Endothelial cell of umbilical vein (primary cell): ENCODE measurements at regions of chr3 and their contacts with region 1.

Region 1: DNA sequence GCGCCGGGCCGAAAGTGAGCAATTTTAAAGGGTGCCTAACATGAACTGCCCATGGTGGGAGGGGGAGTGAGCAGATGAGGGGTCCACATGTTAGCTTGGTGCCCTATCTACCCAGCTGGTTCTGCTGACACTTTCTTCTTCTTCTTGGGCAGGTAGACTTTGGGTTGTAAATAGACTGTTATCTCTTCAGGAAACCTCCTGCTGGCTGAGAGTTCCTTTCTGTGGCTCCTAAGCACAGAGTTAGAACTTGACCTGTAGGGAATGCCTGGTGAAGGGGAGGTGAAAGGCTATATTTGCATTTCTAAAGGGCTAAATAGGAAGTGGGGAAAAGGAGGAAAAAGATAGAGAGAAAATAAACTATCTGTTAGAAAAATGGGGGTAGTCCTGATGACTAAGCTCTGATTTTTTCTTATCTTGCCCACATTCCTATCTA is 521.4 kb upstream of the TGFBR2 start:
- DNase-seq: peak; percentile 10
- H3K4me3 ChIP-seq: no peak overlapping the region
- H3K27ac ChIP-seq: no peak overlapping the region
- H3K4me1 ChIP-seq: no peaks in the 10 kb centered on the region
- H3K27me3 ChIP-seq: no peaks in the 10 kb centered on the region
- CTCF ChIP-seq: no peak
- POLR2A ChIP-seq: no peak

Region 2: GRCh38 chr3:30020380-30020779 is 64.6 kb before region 1 on chr3:
- CTCF ChIA-PET with region 1: no interaction called
- POLR2A ChIA-PET with region 1: no interaction called
- dilution Hi-C with region 1: no loop called
- intact Hi-C with region 1: no loop called
- DNase-seq: no peak
- H3K4me3 ChIP-seq: no peak overlapping the region
- H3K27ac ChIP-seq: no peak overlapping the region
- H3K4me1 ChIP-seq: peaks cover 8% of the 10 kb centered on the region
- H3K27me3 ChIP-seq: no peaks in the 10 kb centered on the region
- CTCF ChIP-seq: no peak
- POLR2A ChIP-seq: no peak

Region 3: DNA sequence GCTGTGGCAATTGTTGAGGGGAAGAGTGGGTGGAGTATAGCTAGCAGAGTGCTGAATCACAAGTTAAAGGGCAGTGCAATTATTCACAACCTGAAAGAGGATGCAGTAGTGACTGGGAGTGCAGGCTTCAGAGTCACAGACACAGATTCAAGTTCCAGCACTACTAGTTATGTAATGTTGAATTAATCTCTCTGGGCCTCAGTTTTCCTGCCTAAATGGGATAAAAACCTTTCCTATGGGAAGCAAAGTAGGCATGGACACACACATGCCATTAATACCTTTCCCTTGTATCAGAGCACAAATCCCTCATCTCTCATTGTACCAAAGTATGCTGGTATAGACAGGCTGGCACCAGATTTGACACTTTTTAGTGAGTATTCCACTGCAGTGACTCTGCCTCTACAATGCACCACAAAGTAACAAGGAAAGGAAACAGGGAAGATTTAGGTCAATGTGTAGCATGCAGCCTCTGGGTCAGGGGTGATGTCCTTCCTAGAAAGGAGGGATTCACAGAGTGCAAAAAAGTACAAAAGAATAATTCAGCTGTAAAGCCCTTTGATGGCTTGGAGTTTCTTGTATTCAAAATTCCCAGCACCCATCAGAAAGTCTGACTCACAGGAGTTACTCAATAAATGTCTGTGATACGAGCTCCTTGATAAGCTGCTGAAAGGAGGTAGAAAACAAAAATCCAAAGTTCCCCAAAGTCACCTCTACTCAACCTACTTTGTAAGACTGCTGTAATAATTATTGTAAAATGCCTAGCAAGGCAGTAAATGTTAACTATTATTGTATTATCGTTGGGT is 13.9 kb after region 1 on chr3:
- CTCF ChIA-PET with region 1: interaction called, 3 read pairs
- POLR2A ChIA-PET with region 1: interaction called, 11 read pairs
- dilution Hi-C with region 1: no loop called
- intact Hi-C with region 1: no loop called
- DNase-seq: peak; percentile 14
- H3K4me3 ChIP-seq: no peak overlapping the region
- H3K27ac ChIP-seq: no peak overlapping the region
- H3K4me1 ChIP-seq: no peaks in the 10 kb centered on the region
- H3K27me3 ChIP-seq: no peaks in the 10 kb centered on the region
- CTCF ChIP-seq: no peak
- POLR2A ChIP-seq: no peak

Region 4: GRCh38 chr3:30353711-30354467 is 268.9 kb after region 1 on chr3:
- CTCF ChIA-PET with region 1: no interaction called
- POLR2A ChIA-PET with region 1: no interaction called
- dilution Hi-C with region 1: no loop called
- intact Hi-C with region 1: no loop called
- DNase-seq: no peak
- H3K4me3 ChIP-seq: no peak overlapping the region
- H3K27ac ChIP-seq: no peak overlapping the region
- H3K4me1 ChIP-seq: peaks cover 21% of the 10 kb centered on the region
- H3K27me3 ChIP-seq: no peaks in the 10 kb centered on the region
- CTCF ChIP-seq: no peak
- POLR2A ChIP-seq: no peak